ENCODE measurements at regions of chr14 and their contacts with region 1.

Region 1: DNA sequence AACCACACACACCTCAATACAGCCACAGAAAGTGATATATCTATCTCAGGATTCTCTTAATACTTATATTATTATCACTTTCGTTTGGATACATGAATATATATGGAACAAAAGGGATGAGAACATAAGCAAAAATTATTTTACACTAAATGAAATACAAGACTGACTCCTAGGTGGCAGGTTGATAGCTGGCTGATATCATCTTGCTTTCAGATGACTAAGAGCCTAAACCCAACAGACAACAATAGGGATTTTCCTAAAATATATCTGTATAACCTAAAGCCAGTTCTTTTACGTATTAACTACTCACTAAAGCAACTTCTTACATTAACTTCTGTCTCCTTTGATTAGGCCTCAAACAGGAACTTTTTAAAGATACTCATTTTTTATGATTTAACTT is 65.1 kb downstream of the BAZ1A start:
- DNase-seq: no peak
- ATAC-seq: no peak
- H3K4me3 ChIP-seq: no peak overlapping the region
- H3K4me3 Mint-ChIP-seq: no peak overlapping the region
- H3K27ac ChIP-seq: no peak overlapping the region
- H3K27ac Mint-ChIP-seq: peak overlapping the region in 1 of 2 donors; percentile 35
- H3K4me1 ChIP-seq: peaks cover 0 to 6% of the 10 kb centered on the region in 2 experiments
- H3K4me1 Mint-ChIP-seq: peaks cover 13 to 14% (median 14%) of the 10 kb centered on the region in 3 donors
- H3K27me3 ChIP-seq: no peaks in the 10 kb centered on the region
- H3K27me3 Mint-ChIP-seq: no peaks in the 10 kb centered on the region

Region 2: DNA sequence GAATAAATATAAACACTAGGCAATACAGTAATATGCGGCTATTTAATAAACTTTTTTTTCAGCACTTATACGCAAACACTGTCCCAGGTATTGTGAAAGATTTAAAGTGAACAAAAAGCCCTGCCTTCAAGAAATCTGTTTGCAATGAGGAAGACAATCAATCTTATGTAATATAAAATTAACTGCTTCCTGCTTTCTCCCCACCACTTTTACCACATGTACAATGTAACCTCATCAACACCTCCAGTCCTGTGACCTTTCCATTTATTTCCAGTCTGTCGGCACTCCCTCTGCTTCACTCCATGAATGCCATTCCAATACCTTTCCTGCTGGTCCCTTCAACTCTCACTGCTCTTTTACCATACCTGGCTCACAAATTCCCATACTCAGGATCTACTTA is 190.6 kb before region 1 on chr14:
- CTCF ChIA-PET with region 1: no interaction called
- POLR2A ChIA-PET with region 1: no interaction called
- DNase-seq: no peak
- ATAC-seq: no peak
- H3K4me3 ChIP-seq: no peak overlapping the region
- H3K4me3 Mint-ChIP-seq: no peak overlapping the region
- H3K27ac ChIP-seq: no peak overlapping the region
- H3K27ac Mint-ChIP-seq: peak overlapping the region in 1 of 2 donors; percentile 62
- H3K4me1 ChIP-seq: peaks cover 0 to 22% of the 10 kb centered on the region in 2 experiments
- H3K4me1 Mint-ChIP-seq: peaks cover 57 to 63% (median 63%) of the 10 kb centered on the region in 3 donors
- H3K27me3 ChIP-seq: no peaks in the 10 kb centered on the region
- H3K27me3 Mint-ChIP-seq: no peaks in the 10 kb centered on the region

Region 3: GRCh38 chr14:34865889-34866574 is 56.0 kb after region 1 on chr14:
- CTCF ChIA-PET with region 1: no interaction called
- POLR2A ChIA-PET with region 1: interaction called in 1 of 2 experiments, 10 read pairs
- DNase-seq: no peak
- ATAC-seq: no peak
- H3K4me3 ChIP-seq: no peak overlapping the region
- H3K4me3 Mint-ChIP-seq: no peak overlapping the region
- H3K27ac ChIP-seq: no peak overlapping the region
- H3K27ac Mint-ChIP-seq: no peak overlapping the region
- H3K4me1 ChIP-seq: peaks cover 13 to 14% of the 10 kb centered on the region in 2 experiments
- H3K4me1 Mint-ChIP-seq: peaks cover 55 to 59% (median 59%) of the 10 kb centered on the region in 3 donors
- H3K27me3 ChIP-seq: no peaks in the 10 kb centered on the region
- H3K27me3 Mint-ChIP-seq: no peaks in the 10 kb centered on the region